Activated T-helper 1 cell treated with anti-CD3 and anti-CD28 coated beads, Interleukin-12 subunit alpha, Interleukin-12 subunit beta, Interleukin-2, Interleukin-4 antibody, amounts not matched to agents 30 ng/mL and 10 ng/mL and 1 ng/mL, durations not matched to agents 14 hours and 24 hours and 36 hours (primary cell): ENCODE measurements at regions of chr1 and their contacts with region 1.

Region 1: DNA sequence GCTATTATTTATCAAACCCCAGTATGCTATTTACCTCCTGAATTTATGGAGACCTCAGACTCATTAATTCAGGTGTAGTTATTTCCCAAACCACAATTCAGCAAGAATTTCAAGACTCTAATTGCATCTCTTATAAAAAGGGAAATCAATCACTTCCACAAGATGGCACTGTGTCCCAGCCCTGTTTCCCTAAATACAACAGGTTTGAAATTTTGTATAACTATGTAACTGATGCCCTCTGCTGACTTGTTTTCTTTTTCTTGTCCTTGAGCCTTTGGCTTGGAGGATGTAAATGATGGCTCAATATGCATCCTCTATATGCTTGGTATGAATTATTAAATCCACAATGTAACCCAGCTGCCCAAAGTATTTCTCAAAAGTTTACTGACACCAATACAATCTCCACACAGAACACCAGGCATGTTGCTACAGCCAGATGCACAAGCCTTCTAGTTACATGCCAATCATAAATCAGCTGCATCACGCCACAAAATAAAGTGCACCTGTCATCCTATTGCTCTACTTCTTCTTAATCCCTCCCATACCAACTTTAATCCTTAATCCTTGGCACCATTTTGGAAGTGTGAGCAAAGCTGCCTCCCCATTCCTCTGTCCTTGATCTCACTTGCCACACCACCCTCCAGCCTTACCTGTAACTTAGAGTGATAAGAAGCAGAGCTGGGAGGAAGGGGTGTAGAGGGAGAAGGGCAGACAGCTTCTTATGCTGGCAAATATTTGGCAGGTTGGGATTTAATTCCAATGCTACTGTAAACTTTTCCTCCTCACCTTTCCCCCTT is 9.0 kb downstream of the C1orf105 start:
- DNase-seq: no peak
- H3K4me3 Mint-ChIP-seq: no peak overlapping the region
- H3K27ac Mint-ChIP-seq: no peak overlapping the region
- H3K4me1 Mint-ChIP-seq: peaks cover 25% of the 10 kb centered on the region
- H3K27me3 Mint-ChIP-seq: no peaks in the 10 kb centered on the region

Region 2: GRCh38 chr1:172002725-172003345 is 426.7 kb before region 1 on chr1:
- intact Hi-C with region 1: loop called (anchors 1 kb)
- DNase-seq: no peak
- H3K4me3 Mint-ChIP-seq: no peak overlapping the region
- H3K27ac Mint-ChIP-seq: no peak overlapping the region
- H3K4me1 Mint-ChIP-seq: no peaks in the 10 kb centered on the region
- H3K27me3 Mint-ChIP-seq: no peaks in the 10 kb centered on the region

Region 3: GRCh38 chr1:172089768-172090510 is 339.6 kb before region 1 on chr1:
- intact Hi-C with region 1: loop called (anchors 1 kb)
- DNase-seq: peak; percentile 20
- H3K4me3 Mint-ChIP-seq: no peak overlapping the region
- H3K27ac Mint-ChIP-seq: peak overlapping the region; percentile 36
- H3K4me1 Mint-ChIP-seq: peaks cover 7% of the 10 kb centered on the region
- H3K27me3 Mint-ChIP-seq: no peaks in the 10 kb centered on the region

Region 4: GRCh38 chr1:172443626-172444453 is 14.3 kb after region 1 on chr1 and contains the start of gene PIGC:
- intact Hi-C with region 1: loop called (anchors 1 kb)
- DNase-seq: peak; percentile 85
- H3K4me3 Mint-ChIP-seq: peak within 1 kb of the TSS; percentile 94
- H3K27ac Mint-ChIP-seq: peak within 1 kb of the TSS; percentile 86
- H3K4me1 Mint-ChIP-seq: peaks cover 33% of the 10 kb centered on the region
- H3K27me3 Mint-ChIP-seq: no peaks in the 10 kb centered on the region
- total RNA-seq, gene PIGC: 22.6 and 23.3 TPM in 2 replicates

Region 5: GRCh38 chr1:172727956-172728603 is 298.6 kb after region 1 on chr1:
- intact Hi-C with region 1: loop called (anchors 1 kb)
- DNase-seq: peak; percentile 37
- H3K4me3 Mint-ChIP-seq: no peak overlapping the region
- H3K27ac Mint-ChIP-seq: no peak overlapping the region
- H3K4me1 Mint-ChIP-seq: peaks cover 18% of the 10 kb centered on the region
- H3K27me3 Mint-ChIP-seq: peaks cover 15% of the 10 kb centered on the region